Spleen (tissue), 13 donors: ENCODE measurements at regions of chr12 and their contacts with region 1.

Region 1: GRCh38 chr12:108664338-108665258 is 30.9 kb upstream of the SELPLG start:
- DNase-seq: peak; percentile 90
- H3K4me3 ChIP-seq: peak overlapping the region in 1 of 8 donors; percentile 44
- H3K27ac ChIP-seq: peak overlapping the region; percentile 30 to 90 (median 87)
- H3K4me1 ChIP-seq: peaks cover 35 to 72% (median 61%) of the 10 kb centered on the region in 6 donors
- H3K27me3 ChIP-seq: no peaks in the 10 kb centered on the region
- CTCF ChIP-seq: peak; percentile 87 to 99 (median 95)
- POLR2A ChIP-seq: no peak

Region 2: GRCh38 chr12:108562348-108563135 is 102.1 kb before region 1 on chr12 and contains the start of gene ISCU:
- intact Hi-C with region 1: loop called (anchors 10 kb)
- DNase-seq: peak; percentile 100
- H3K4me3 ChIP-seq: peak within 1 kb of the TSS; percentile 67 to 99 (median 92)
- H3K27ac ChIP-seq: peak within 1 kb of the TSS; percentile 90 to 98 (median 94)
- H3K4me1 ChIP-seq: peaks cover 61 to 89% (median 79%) of the 10 kb centered on the region in 6 donors
- H3K27me3 ChIP-seq: no peaks in the 10 kb centered on the region
- CTCF ChIP-seq: peak in 5 of 11 experiments; percentile 11 to 42 (median 22)
- POLR2A ChIP-seq: peak; percentile 73 to 90 (median 76)
- total RNA-seq, gene ISCU: 98.9 to 220 (median 144) TPM

Region 3: DNA sequence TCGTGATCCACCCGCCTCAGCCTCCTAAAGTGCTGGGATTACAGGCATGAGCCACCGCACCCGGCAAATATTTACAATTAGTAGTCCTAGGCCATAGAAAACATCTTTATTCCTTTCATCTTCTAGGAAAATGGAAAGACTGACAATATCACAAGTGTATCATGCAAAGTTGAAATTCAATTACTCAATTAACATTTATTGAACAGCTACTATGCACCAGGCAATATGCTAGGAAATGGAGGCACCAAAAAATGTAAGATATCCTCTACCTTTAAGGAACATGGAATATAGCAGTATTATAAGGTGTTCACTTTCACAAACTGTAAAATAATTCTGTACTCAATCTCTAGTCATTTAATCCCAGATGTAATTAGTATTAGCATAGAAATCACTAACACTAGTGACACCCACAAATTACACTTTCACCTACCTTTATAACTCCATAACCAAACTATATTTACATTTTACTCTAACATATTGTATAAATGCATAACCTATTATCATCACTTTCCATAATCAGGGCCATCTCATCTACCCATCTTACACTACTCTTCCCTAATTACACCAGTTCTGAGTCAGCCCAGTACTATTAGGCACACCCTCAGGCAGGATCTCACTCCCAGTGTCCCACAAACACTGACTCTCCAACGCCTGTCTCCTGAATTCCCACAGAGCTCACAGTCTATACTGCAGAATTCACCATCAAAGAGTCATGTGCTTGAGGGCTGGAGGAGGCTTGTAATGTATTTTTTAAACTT is 56.3 kb after region 1 on chr12:
- intact Hi-C with region 1: no loop called
- DNase-seq: no peak
- H3K4me3 ChIP-seq: no peak overlapping the region
- H3K27ac ChIP-seq: peak overlapping the region in 4 of 8 donors; percentile 7 to 80 (median 60)
- H3K4me1 ChIP-seq: peaks cover 14 to 79% (median 43%) of the 10 kb centered on the region in 6 donors
- H3K27me3 ChIP-seq: no peaks in the 10 kb centered on the region
- CTCF ChIP-seq: no peak
- POLR2A ChIP-seq: no peak

Region 4: DNA sequence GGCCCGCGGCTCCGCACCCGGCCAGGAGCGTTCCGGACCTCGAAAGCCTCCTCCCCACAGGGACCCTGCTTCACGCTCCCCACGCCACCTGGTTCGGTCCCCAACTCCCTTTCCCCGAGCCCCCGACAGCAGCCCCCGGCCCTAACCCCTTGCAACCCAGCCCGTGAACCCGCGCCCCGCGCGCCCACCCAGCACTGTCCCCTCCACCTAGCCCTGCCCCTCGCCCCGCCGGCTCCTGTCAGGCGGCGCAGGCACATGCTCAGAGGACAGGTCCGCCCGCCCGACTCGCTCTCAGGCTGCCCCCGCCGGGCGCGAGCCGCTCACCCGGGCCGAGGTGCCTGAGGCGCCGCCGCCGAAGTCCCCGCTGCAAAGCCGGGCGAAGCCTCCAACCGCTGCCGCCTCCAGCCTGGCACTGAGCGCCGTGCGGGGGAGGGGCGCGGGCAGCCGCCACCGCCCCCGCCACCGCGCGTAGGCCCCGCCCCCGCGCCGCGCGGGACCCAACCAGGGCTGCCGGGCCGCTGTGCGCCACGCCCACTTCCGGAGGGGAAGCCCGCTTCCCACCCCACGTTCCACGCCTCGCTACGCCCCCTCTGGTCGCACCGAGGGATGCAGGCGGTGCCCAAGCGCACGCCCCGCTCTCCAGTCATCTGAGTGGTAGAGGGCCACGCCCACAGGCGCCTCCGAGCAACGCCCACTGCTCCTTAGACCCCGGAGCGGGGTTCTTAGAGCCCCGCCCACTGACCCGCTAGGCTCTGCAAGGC is 66.7 kb after region 1 on chr12 and contains the start of gene CORO1C:
- intact Hi-C with region 1: loop called (anchors 10 kb)
- DNase-seq: peak; percentile 99
- H3K4me3 ChIP-seq: peak within 1 kb of the TSS; percentile 47 to 94 (median 78)
- H3K27ac ChIP-seq: peak within 1 kb of the TSS; percentile 67 to 97 (median 96)
- H3K4me1 ChIP-seq: peaks cover 8 to 73% (median 38%) of the 10 kb centered on the region in 6 donors
- H3K27me3 ChIP-seq: no peaks in the 10 kb centered on the region
- CTCF ChIP-seq: peak; percentile 86 to 99 (median 95)
- POLR2A ChIP-seq: peak in 2 of 3 donors; percentile 75 to 89
- total RNA-seq, gene CORO1C: 71.2 to 119 (median 79.1) TPM

Region 5: GRCh38 chr12:108803428-108804105 is 139.0 kb after region 1 on chr12:
- intact Hi-C with region 1: loop called (anchors 5 kb)
- DNase-seq: peak; percentile 78
- H3K4me3 ChIP-seq: no peak overlapping the region
- H3K27ac ChIP-seq: peak overlapping the region; percentile 48 to 79 (median 72)
- H3K4me1 ChIP-seq: peaks cover 10 to 47% (median 34%) of the 10 kb centered on the region in 6 donors
- H3K27me3 ChIP-seq: no peaks in the 10 kb centered on the region
- CTCF ChIP-seq: peak; percentile 91 to 97 (median 95)
- POLR2A ChIP-seq: no peak

Region 6: GRCh38 chr12:108950991-108951739 is 286.6 kb after region 1 on chr12:
- intact Hi-C with region 1: loop called (anchors 5 kb)
- DNase-seq: peak; percentile 89
- H3K4me3 ChIP-seq: peak overlapping the region in 1 of 8 donors; percentile 30
- H3K27ac ChIP-seq: no peak overlapping the region
- H3K4me1 ChIP-seq: peaks cover 0 to 19% (median 7%) of the 10 kb centered on the region in 6 donors
- H3K27me3 ChIP-seq: no peaks in the 10 kb centered on the region
- CTCF ChIP-seq: peak; percentile 65 to 90 (median 82)
- POLR2A ChIP-seq: no peak

Region 7: DNA sequence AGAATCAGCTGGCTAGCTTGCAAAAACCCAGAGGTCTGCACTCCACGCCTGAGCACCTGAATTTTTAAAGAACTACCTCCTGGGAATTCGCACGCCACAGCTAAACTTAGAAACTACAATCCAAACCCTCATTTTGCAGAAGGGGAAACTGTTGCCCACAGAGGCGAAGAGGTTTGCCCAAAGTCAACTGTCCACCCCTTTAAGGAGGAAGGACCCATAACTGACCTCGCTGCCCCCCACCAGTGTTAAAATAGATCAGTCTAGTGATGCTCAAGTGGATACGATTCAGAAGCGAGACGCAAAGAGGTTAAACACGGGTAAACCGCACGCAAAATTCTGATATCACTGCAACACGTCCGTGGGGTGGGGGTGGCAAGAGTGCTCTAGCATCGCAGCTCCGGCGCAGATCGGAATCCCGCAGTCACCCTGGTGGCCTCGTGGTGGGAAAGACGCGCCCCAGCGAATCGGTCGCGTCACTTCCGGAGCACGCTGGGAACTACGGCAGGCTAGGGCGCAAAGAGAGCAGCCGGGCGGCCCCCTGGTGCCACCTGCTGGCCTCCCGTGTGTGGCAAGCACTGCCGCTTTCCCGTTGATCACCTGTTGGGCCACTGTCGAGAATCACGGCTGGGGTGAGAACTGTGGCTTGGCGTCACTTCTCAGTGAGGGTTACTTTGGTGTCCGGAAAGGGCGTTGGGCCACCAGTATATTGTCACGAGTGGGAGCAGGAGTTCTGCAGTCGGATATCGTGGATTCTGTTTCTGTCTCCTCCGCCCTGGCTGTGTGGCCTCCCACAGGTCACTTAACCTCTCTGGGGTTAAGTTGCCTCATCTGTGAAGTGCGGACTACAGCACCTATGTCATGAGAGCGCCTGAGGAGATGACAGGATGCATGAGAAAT is 428.7 kb after region 1 on chr12 and contains the start of gene ALKBH2:
- intact Hi-C with region 1: loop called (anchors 10 kb)
- DNase-seq: peak; percentile 99
- H3K4me3 ChIP-seq: peak within 1 kb of the TSS; percentile 24 to 74 (median 46)
- H3K27ac ChIP-seq: peak within 1 kb of the TSS in 7 of 8 donors; percentile 9 to 84 (median 76)
- H3K4me1 ChIP-seq: peaks cover 22 to 54% (median 34%) of the 10 kb centered on the region in 6 donors
- H3K27me3 ChIP-seq: peaks cover 0 to 8% (median 0%) of the 10 kb centered on the region in 7 donors
- CTCF ChIP-seq: peak; percentile 90 to 99 (median 98)
- POLR2A ChIP-seq: peak in 1 of 3 donors; percentile 30
- total RNA-seq, gene ALKBH2: 8.6 to 18.8 (median 12.3) TPM